ENCODE measurements at regions of chr1 and their contacts with region 1.

Region 1: DNA sequence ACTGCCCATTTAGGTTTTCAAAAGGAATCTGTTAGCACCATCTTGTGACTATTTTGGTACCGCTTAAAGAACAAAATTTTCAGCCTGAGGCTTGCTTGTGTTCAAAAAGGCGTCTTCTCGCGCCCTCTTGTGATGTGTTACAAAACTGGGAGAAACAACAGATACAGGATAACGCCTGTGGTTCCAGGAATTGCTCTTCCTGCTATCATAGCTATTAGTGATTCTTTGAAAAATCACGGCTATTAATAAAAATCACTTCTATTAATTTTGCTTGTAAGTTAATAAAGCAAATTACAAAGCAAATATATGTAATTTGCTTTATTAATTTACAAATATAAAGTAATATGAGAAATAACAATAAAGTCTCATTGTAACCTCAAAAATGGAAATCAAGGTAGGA is 82.2 kb upstream of the ABCD3 start:
- DNase-seq: no peak
- H3K4me3 ChIP-seq: no peak overlapping the region
- H3K27ac ChIP-seq: peak overlapping the region; percentile 65
- H3K4me1 ChIP-seq: peaks cover 17% of the 10 kb centered on the region
- H3K27me3 ChIP-seq: no peaks in the 10 kb centered on the region
- CTCF ChIP-seq: peak; percentile 89

Region 2: DNA sequence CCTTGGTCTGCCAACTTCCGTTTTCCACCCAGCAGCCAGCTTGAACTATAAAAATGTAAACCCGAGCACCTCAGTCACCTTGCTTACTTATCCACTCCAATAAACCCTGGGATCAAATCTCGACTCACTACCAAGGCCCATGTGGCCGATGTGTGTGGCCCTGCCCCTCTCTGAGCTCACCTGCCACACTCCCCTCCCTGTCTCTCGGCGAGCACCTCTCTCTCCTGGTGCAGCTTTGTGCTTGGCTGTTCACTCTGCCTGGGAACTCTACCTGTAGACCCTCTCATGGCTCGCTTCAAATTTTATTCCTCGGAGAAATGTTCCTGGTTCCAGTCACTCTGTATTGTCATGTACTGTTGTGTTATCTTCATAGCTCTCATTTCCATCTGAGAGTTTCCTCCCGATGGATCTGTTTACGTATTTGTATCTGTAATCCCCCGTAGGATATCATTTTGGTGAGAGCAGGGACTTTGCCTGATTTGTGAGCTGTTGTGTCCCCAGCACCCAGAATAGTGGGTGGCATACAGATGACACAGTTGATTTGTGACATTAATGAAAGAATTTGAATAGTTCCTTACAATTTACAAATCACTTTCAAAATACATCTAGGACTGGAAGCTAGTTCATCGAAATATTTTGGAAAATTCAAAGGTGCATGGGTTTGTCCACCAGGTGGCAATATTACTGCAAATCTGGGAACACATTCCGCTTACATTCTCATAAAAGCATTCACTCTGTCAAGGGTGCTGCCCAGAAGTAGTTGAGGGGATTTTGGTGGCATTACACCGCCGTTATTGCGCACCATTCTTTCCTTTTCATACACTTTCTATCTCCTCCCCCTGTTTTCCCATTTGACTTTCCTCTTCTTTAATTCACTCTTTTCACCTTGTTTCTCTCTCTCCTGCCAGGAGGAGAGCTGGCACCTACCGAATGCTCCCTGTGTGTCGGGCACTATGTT is 310.3 kb before region 1 on chr1:
- intact Hi-C with region 1: loop called (anchors 5 kb)
- DNase-seq: no peak
- H3K4me3 ChIP-seq: no peak overlapping the region
- H3K27ac ChIP-seq: no peak overlapping the region
- H3K4me1 ChIP-seq: peaks cover 22% of the 10 kb centered on the region
- H3K27me3 ChIP-seq: no peaks in the 10 kb centered on the region
- CTCF ChIP-seq: peak; percentile 87

Region 3: DNA sequence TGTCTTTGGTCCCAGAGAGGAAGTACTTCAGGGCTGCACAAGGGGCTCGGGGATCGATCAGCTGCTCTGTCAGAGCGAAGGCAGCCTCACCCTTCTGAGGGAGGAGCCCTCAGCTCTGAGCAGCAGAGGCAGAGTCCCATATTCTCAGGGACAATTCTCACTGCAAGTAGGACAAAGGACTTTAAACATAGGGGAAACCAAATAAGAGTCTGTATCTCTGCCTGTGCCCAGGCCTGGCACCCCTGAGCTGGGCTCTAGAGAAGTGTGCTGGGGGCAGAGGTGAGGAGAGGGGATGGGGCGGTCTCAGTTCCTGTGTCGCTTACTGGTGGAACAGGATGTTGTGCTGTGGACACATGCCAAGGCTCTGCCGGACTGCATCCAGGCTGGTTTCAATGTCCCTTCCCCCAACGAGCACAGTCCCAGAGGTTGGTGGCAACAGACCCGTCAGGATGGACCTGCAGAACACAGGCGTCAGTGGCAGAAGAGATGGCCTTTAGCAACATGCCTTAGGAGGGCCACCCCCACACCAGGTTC is 291.6 kb before region 1 on chr1:
- intact Hi-C with region 1: loop called (anchors 5 kb)
- DNase-seq: peak; percentile 72
- H3K4me3 ChIP-seq: peak overlapping the region; percentile 15
- H3K27ac ChIP-seq: peak overlapping the region; percentile 94
- H3K4me1 ChIP-seq: peaks cover 86% of the 10 kb centered on the region
- H3K27me3 ChIP-seq: no peaks in the 10 kb centered on the region
- CTCF ChIP-seq: no peak

Region 4: GRCh38 chr1:94061513-94062443 is 274.2 kb before region 1 on chr1:
- intact Hi-C with region 1: loop called (anchors 5 kb)
- DNase-seq: peak; percentile 56
- H3K4me3 ChIP-seq: no peak overlapping the region
- H3K27ac ChIP-seq: peak overlapping the region; percentile 77
- H3K4me1 ChIP-seq: peaks cover 68% of the 10 kb centered on the region
- H3K27me3 ChIP-seq: no peaks in the 10 kb centered on the region
- CTCF ChIP-seq: peak; percentile 91

Region 5: DNA sequence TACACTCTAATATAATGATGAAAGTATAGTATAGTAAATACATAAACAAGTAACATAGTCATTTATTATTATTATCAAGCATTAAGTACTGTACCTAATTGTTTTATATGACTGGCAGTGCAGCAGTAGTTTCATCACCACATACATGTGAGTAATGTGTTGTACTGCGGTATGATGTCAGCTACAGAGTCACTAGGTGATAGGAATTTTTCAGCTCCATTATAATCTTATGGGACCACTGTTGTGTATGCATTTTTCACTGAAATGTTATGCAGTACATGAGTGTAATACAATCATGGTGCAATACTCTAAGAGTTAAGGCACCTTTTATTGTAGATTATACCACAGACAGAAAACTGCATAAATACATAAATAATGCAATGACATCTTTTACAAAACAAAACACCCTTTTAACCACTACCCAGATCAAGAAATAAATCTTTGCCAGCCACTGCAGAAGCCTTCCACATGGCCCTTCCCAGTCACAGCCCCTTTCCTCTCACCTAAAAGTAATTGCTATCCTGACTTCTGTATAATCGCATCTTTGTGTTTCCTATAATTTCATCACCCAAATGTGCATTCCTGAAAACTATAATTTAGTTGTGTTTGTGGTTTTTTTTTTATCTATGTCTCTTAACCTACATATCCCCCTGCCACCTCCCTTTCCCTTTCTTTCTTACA is 98.6 kb after region 1 on chr1:
- intact Hi-C with region 1: no loop called
- DNase-seq: no peak
- H3K4me3 ChIP-seq: no peak overlapping the region
- H3K27ac ChIP-seq: no peak overlapping the region
- H3K4me1 ChIP-seq: peaks cover 18% of the 10 kb centered on the region
- H3K27me3 ChIP-seq: no peaks in the 10 kb centered on the region
- CTCF ChIP-seq: no peak